PC-3 (cell line): ENCODE measurements at regions of chr4 and their contacts with region 1.

Region 1: DNA sequence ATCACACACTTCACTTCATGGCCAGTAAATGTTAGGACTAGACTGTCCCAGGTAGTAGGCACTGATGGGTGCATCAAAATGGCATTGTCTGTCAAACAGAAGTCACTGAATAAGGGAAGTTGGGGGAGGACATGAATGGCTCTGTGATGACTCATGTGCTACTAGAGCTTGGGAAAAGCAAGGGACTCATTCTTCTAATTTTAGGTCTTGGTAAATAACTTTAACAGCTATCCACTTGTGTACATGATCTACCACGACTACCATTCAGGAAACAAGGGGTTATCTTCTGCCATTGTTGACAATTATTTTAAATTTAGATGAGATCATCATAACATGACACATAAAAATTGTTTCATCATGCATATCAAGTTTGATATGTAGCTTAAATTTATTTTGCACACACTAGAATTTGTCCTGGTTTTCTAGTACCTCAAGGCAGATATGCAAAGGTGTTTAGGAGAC is 6.3 kb downstream of the AREG start:
- DNase-seq: peak; percentile 85
- ATAC-seq: peak; percentile 37
- H3K4me3 ChIP-seq: peak overlapping the region; percentile 76; the same call in 1 of the 2 replicates
- H3K27ac ChIP-seq: peak overlapping the region; percentile 80
- H3K4me1 ChIP-seq: peaks cover 88% of the 10 kb centered on the region
- H3K27me3 ChIP-seq: no peaks in the 10 kb centered on the region
- CTCF ChIP-seq: no peak

Region 2: GRCh38 chr4:74376888-74377483 is 74.2 kb before region 1 on chr4:
- CTCF ChIA-PET with region 1: no interaction called
- POLR2A ChIA-PET with region 1: interaction called, 12 read pairs
- intact Hi-C with region 1: loop called (anchors 2 kb)
- DNase-seq: peak; percentile 60
- ATAC-seq: peak; percentile 14; the same call in 1 of the 2 replicates
- H3K4me3 ChIP-seq: peak overlapping the region; percentile 56
- H3K27ac ChIP-seq: peak overlapping the region; percentile 100
- H3K4me1 ChIP-seq: peaks cover 40% of the 10 kb centered on the region
- H3K27me3 ChIP-seq: no peaks in the 10 kb centered on the region
- CTCF ChIP-seq: peak; percentile 71

Region 3: GRCh38 chr4:74473155-74473811 is 22.1 kb after region 1 on chr4:
- CTCF ChIA-PET with region 1: interaction called, 10 read pairs
- POLR2A ChIA-PET with region 1: no interaction called
- intact Hi-C with region 1: no loop called
- DNase-seq: peak; percentile 82
- ATAC-seq: peak; percentile 65
- H3K4me3 ChIP-seq: no peak overlapping the region
- H3K27ac ChIP-seq: 0 out of 2 replicates have a peak overlapping the region, but pooled peaks have one; percentile 4
- H3K4me1 ChIP-seq: peaks cover 14% of the 10 kb centered on the region
- H3K27me3 ChIP-seq: no peaks in the 10 kb centered on the region
- CTCF ChIP-seq: no peak

Region 4: GRCh38 chr4:74499986-74500781 is 49.0 kb after region 1 on chr4:
- CTCF ChIA-PET with region 1: no interaction called
- POLR2A ChIA-PET with region 1: no interaction called
- intact Hi-C with region 1: loop called (anchors 5 kb)
- DNase-seq: no peak
- ATAC-seq: no peak
- H3K4me3 ChIP-seq: no peak overlapping the region
- H3K27ac ChIP-seq: no peak overlapping the region
- H3K4me1 ChIP-seq: peaks cover 40% of the 10 kb centered on the region
- H3K27me3 ChIP-seq: no peaks in the 10 kb centered on the region
- CTCF ChIP-seq: no peak